CD14-positive monocyte (primary cell): ENCODE measurements at regions of chr4 and their contacts with region 1.

Region 1: DNA sequence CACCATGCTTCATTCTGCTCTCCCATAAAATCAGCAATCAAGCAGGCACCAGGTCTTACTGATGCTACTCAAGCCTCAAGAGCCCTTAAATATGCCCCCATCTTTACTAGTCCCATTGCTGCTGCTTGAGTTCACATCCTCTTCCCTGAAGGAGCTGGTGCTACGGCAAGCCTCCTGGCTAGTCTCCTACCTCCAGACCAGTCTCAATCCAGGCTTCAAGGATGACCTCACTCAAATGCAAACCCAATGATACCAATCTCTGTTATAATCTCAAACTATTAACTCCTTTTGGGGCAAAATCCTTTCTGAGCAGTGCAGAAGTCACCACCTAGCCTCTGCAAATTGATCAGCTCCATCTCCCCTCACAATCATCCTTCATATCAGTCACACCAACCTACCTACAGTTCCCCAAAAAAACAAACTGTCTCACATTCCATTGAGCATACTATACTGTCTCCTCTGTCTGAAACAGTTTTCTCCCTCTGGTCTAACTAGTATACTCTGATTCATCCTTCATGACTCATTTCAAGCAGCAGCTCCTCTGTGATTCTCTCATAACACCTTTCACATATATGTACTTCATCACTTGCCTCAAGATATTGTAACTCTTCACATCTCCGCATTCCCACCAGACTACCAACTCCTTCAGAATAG is 30.0 kb downstream of the PAPSS1 start:
- DNase-seq: peak in 1 of 3 donors; percentile 7
- H3K4me3 ChIP-seq: no peak overlapping the region
- H3K4me3 Mint-ChIP-seq: no peak overlapping the region
- H3K27ac ChIP-seq: no peak overlapping the region
- H3K27ac Mint-ChIP-seq: no peak overlapping the region
- H3K4me1 ChIP-seq: peaks cover 11 to 17% of the 10 kb centered on the region in 2 donors
- H3K4me1 Mint-ChIP-seq: peaks cover 14% of the 10 kb centered on the region
- H3K27me3 ChIP-seq: no peaks in the 10 kb centered on the region
- H3K27me3 Mint-ChIP-seq: no peaks in the 10 kb centered on the region
- CTCF ChIP-seq: no peak

Region 2: GRCh38 chr4:107736924-107737448 is 46.9 kb after region 1 on chr4:
- intact Hi-C with region 1: loop called in 1 of 2 experiments (anchors 5 kb)
- DNase-seq: peak in 2 of 3 donors; percentile 46 to 55
- H3K4me3 ChIP-seq: no peak overlapping the region
- H3K4me3 Mint-ChIP-seq: no peak overlapping the region
- H3K27ac ChIP-seq: no peak overlapping the region
- H3K27ac Mint-ChIP-seq: no peak overlapping the region
- H3K4me1 ChIP-seq: no peaks in the 10 kb centered on the region
- H3K4me1 Mint-ChIP-seq: peaks cover 2% of the 10 kb centered on the region
- H3K27me3 ChIP-seq: no peaks in the 10 kb centered on the region
- H3K27me3 Mint-ChIP-seq: peaks cover 0 to 5% (median 3%) of the 10 kb centered on the region in 3 donors
- CTCF ChIP-seq: peak; percentile 96